T-cell (primary cell): ENCODE measurements at regions of chr3 and their contacts with region 1.

Region 1: DNA sequence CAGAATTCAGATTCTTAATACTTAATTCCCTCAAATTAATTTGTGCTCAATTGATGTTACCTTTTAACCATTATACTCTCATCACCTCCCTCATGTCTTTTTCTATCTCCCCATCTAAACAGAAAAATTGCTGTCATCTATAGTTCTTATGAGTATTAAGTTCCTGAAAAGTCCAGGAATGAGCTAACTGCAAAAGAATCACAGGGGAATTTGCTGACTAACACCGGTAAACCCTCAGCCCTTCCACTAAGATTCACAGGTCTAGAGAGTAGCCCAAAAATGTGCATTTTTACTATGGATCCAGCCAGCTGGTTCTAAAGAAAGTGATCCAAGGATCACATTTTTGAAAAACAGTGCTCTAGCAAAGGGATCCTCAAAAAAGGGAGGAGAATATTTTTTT is 67.0 kb downstream of the SETD2 start:
- DNase-seq: no peak
- ATAC-seq: no peak
- H3K4me3 ChIP-seq: no peak overlapping the region
- H3K4me3 Mint-ChIP-seq: no peak overlapping the region
- H3K27ac ChIP-seq: no peak overlapping the region
- H3K27ac Mint-ChIP-seq: peak overlapping the region in 1 of 2 donors; percentile 29
- H3K4me1 ChIP-seq: no peaks in the 10 kb centered on the region
- H3K4me1 Mint-ChIP-seq: peaks cover 0 to 6% (median 4%) of the 10 kb centered on the region in 3 donors
- H3K27me3 ChIP-seq: no peaks in the 10 kb centered on the region
- H3K27me3 Mint-ChIP-seq: no peaks in the 10 kb centered on the region

Region 2: DNA sequence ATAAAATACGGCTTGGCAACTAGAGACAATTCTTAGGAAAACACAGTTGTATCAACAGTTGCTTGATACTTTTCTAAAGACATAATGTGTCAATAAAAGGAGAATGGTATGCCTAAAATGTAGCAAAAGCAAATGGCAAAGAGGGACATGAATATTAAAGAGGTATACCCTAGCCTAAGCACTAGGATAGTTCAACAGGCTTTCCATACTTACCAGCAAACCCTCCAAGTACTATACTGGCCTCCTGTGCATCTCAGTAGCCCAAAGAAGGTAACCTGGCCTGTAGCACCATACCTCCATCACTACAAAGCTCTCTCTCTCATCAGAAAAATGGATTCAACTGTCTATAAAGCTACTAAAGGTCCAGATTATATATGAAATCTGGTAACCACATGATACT is 59.4 kb after region 1 on chr3:
- CTCF ChIA-PET with region 1: interaction called in 1 of 2 experiments, 10 read pairs
- POLR2A ChIA-PET with region 1: no interaction called
- DNase-seq: no peak
- ATAC-seq: peak in 1 of 4 experiments; percentile 39
- H3K4me3 ChIP-seq: no peak overlapping the region
- H3K4me3 Mint-ChIP-seq: peak overlapping the region in 1 of 3 donors; percentile 24
- H3K27ac ChIP-seq: no peak overlapping the region
- H3K27ac Mint-ChIP-seq: no peak overlapping the region
- H3K4me1 ChIP-seq: peaks cover 16 to 46% of the 10 kb centered on the region in 2 experiments
- H3K4me1 Mint-ChIP-seq: peaks cover 89 to 94% (median 91%) of the 10 kb centered on the region in 3 donors
- H3K27me3 ChIP-seq: no peaks in the 10 kb centered on the region
- H3K27me3 Mint-ChIP-seq: no peaks in the 10 kb centered on the region